OCI-LY7 (cell line): ENCODE measurements at regions of chr11 and their contacts with region 1.

Region 1: GRCh38 chr11:117946842-117947526 is 17.8 kb upstream of the TMPRSS13 start:
- DNase-seq: peak; percentile 76
- H3K4me3 ChIP-seq: no peak overlapping the region
- H3K27ac ChIP-seq: no peak overlapping the region
- H3K4me1 ChIP-seq: peaks cover 22% of the 10 kb centered on the region
- CTCF ChIP-seq: peak; percentile 98

Region 2: DNA sequence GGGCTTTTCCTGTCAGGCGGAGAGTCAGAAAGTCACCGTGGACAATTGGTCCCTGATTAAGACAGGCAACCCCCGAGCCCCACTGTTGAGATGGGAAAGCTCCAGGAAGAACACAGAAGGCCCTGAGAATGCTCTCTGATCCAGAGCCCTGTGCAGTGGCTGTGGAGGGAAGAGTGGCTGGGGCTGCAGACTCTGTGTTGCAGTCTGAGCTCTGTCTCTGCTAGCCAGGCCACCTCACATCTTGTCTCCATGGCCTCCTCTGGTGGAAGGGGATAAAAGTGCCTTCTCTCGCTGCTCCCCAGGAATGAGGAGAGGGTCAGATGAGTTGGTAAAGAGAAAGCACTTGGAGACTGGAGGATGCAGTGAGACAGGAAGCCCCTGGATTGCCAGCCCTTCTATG is 478.1 kb before region 1 on chr11:
- CTCF ChIA-PET with region 1: no interaction called
- POLR2A ChIA-PET with region 1: no interaction called
- intact Hi-C with region 1: no loop called
- DNase-seq: no peak
- H3K4me3 ChIP-seq: no peak overlapping the region
- H3K27ac ChIP-seq: no peak overlapping the region
- H3K4me1 ChIP-seq: no peaks in the 10 kb centered on the region
- CTCF ChIP-seq: no peak

Region 3: GRCh38 chr11:117817368-117818040 is 129.5 kb before region 1 on chr11:
- CTCF ChIA-PET with region 1: interaction called, 4 read pairs
- POLR2A ChIA-PET with region 1: interaction called, 3 read pairs
- intact Hi-C with region 1: loop called (anchors 10 kb)
- DNase-seq: peak; percentile 64
- H3K4me3 ChIP-seq: no peak overlapping the region
- H3K27ac ChIP-seq: no peak overlapping the region
- H3K4me1 ChIP-seq: peaks cover 16% of the 10 kb centered on the region
- CTCF ChIP-seq: peak; percentile 98

Region 4: DNA sequence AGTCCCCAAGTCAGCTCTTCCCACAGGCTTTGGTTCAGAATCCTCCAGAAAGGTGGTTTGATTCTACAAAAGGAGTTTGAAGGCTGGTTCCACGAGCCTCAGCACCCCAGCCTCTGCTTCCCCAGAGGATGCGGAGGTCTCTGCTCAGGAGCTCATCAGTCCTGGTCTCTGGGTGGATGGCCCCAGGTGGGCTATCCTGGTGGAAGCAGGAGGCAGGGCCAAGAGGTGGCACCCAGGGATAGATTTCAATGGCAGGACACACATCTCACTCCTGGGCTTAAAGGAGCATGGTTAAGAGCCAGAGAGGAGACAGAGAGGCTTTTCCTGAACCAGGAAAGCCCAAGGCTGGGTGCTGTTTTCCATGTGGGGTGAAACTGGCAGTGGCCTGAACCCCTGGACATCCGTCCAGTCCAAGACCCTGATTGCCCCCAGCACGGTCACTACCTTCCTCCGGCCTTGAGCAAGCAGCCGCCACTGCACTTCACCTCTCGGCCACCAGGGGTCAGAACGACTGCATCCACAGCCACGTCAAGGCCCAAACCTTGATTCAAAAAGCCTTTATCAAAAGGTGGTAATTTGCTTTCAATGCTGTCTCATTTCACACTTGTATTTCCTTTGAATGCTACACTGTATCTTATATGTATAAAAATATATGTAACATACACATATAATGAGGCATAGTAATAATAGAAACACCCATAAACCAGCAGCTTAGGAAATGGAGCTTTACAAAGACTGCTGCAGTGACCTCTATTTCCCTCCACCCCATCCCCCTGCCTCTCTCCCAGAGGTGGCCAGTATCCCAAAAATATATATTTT is 103.1 kb before region 1 on chr11:
- CTCF ChIA-PET with region 1: interaction called, 4 read pairs
- POLR2A ChIA-PET with region 1: no interaction called
- intact Hi-C with region 1: loop called (anchors 1 kb)
- DNase-seq: peak; percentile 67
- H3K4me3 ChIP-seq: no peak overlapping the region
- H3K27ac ChIP-seq: no peak overlapping the region
- H3K4me1 ChIP-seq: no peaks in the 10 kb centered on the region
- CTCF ChIP-seq: peak; percentile 96

Region 5: DNA sequence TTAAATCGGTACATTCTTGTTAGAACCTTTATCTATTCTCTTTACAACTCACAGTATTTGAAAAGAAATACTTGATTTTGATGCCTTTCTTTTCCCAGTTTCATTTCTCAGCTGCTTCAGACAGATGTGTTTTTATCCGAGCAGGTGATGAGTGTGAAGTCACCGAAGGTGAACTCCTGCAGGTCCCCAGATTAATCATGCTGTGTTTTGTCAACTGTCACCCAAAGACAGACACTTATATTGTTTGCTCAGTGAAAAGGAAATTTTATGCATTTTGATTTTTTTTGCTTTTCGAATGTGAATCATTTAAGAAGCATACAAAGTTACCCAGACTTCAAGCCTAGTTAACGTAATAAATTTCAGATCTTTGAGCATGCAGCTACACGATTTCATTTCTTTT is 10.0 kb before region 1 on chr11:
- CTCF ChIA-PET with region 1: interaction called, 12 read pairs
- POLR2A ChIA-PET with region 1: interaction called, 3 read pairs
- intact Hi-C with region 1: no loop called
- DNase-seq: peak; percentile 27
- H3K4me3 ChIP-seq: no peak overlapping the region
- H3K27ac ChIP-seq: no peak overlapping the region
- H3K4me1 ChIP-seq: peaks cover 3% of the 10 kb centered on the region
- CTCF ChIP-seq: no peak

Region 6: GRCh38 chr11:118010738-118011461 is 63.9 kb after region 1 on chr11:
- CTCF ChIA-PET with region 1: no interaction called
- POLR2A ChIA-PET with region 1: interaction called, 3 read pairs
- intact Hi-C with region 1: loop called (anchors 2 kb)
- DNase-seq: peak; percentile 93
- H3K4me3 ChIP-seq: peak overlapping the region; percentile 54
- H3K27ac ChIP-seq: peak overlapping the region; percentile 99
- H3K4me1 ChIP-seq: peaks cover 82% of the 10 kb centered on the region
- CTCF ChIP-seq: no peak

Region 7: GRCh38 chr11:118021146-118021545 is 74.2 kb after region 1 on chr11:
- CTCF ChIA-PET with region 1: no interaction called
- POLR2A ChIA-PET with region 1: no interaction called
- intact Hi-C with region 1: no loop called
- DNase-seq: no peak
- H3K4me3 ChIP-seq: no peak overlapping the region
- H3K27ac ChIP-seq: no peak overlapping the region
- H3K4me1 ChIP-seq: no peaks in the 10 kb centered on the region
- CTCF ChIP-seq: no peak